Activated CD8-positive, alpha-beta T cell treated with anti-CD3 and anti-CD28 coated beads for 36 hours (primary cell): ENCODE measurements at regions of chr5 and their contacts with region 1.

Region 1: GRCh38 chr5:7728076-7728475 is 122.9 kb downstream of the CFAP90 start:
- DNase-seq: no peak
- ATAC-seq: no peak
- H3K4me3 Mint-ChIP-seq: no peak overlapping the region
- H3K27ac Mint-ChIP-seq: no peak overlapping the region
- H3K4me1 Mint-ChIP-seq: no peaks in the 10 kb centered on the region
- H3K27me3 Mint-ChIP-seq: peaks cover 3% of the 10 kb centered on the region
- CTCF ChIP-seq: no peak

Region 2: GRCh38 chr5:7650755-7651154 is 77.3 kb before region 1 on chr5:
- CTCF ChIA-PET with region 1: no interaction called
- POLR2A ChIA-PET with region 1: no interaction called
- intact Hi-C with region 1: no loop called
- DNase-seq: no peak
- ATAC-seq: no peak
- H3K4me3 Mint-ChIP-seq: no peak overlapping the region
- H3K27ac Mint-ChIP-seq: no peak overlapping the region
- H3K4me1 Mint-ChIP-seq: no peaks in the 10 kb centered on the region
- H3K27me3 Mint-ChIP-seq: peaks cover 8% of the 10 kb centered on the region
- CTCF ChIP-seq: no peak

Region 3: GRCh38 chr5:7754992-7755596 is 27.0 kb after region 1 on chr5:
- CTCF ChIA-PET with region 1: interaction called, 10 read pairs
- POLR2A ChIA-PET with region 1: no interaction called
- intact Hi-C with region 1: no loop called
- DNase-seq: peak; percentile 58
- ATAC-seq: peak; percentile 58
- H3K4me3 Mint-ChIP-seq: no peak overlapping the region
- H3K27ac Mint-ChIP-seq: no peak overlapping the region
- H3K4me1 Mint-ChIP-seq: no peaks in the 10 kb centered on the region
- H3K27me3 Mint-ChIP-seq: peaks cover 29% of the 10 kb centered on the region
- CTCF ChIP-seq: peak; percentile 67